ENCODE measurements at regions of chr1 and their contacts with region 1.

Region 1: GRCh38 chr1:32448773-32449456 is 16.0 kb upstream of the ZBTB8B start:
- DNase-seq: no peak
- H3K4me3 ChIP-seq: no peak overlapping the region
- H3K27ac ChIP-seq: no peak overlapping the region
- H3K4me1 ChIP-seq: peaks cover 0 to 12% (median 6%) of the 10 kb centered on the region in 4 donors
- H3K27me3 ChIP-seq: no peaks in the 10 kb centered on the region
- CTCF ChIP-seq: peak in 1 of 4 experiments; percentile 16
- EP300 ChIP-seq: no peak
- POLR2A ChIP-seq: no peak

Region 2: DNA sequence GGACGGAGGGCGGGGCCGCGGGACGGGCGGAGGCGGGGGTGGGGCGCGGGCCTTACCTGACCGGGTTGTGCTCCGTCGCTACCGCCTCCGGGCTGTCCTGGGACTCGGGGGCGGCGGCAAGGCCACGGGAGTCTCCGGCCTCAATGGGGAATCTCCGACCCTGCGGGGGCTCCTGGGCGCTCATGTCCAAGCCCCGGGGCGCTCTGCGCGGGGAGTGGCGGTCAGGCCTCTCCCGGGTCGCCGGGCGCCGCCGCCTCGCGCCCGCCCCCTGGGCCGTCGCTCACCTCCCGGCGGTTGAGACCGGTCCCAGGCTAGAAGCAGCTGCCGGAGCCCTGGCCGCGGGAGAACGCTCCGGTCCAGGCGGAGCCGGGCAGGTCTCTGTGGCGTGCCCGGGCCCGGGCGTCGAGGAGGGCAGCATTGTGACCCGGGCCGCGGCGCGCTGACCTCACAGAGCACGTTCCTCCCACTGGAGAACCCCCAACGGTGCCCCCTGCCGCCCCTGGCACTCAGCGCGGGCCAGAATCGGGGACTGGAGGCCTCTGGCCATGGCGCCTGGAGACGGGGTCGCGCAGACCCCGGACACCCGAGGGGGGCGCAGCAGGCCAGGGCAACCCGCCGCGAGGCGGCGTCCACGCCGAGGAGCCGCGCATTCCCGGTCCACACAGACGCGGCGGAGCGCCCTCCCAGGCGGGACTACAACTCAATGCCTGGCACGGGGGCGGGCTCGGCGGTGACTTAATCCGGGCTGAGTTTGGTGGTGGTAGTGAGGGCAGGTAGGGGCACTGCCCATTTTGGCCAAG is 87.0 kb before region 1 on chr1:
- intact Hi-C with region 1: no loop called
- DNase-seq: peak; percentile 75
- H3K4me3 ChIP-seq: peak overlapping the region in 3 of 4 donors; percentile 39 to 51 (median 46)
- H3K27ac ChIP-seq: peak overlapping the region in 1 of 4 donors; percentile 52
- H3K4me1 ChIP-seq: peaks cover 0 to 21% (median 18%) of the 10 kb centered on the region in 4 donors
- H3K27me3 ChIP-seq: no peaks in the 10 kb centered on the region
- CTCF ChIP-seq: peak in 1 of 4 experiments; percentile 25
- EP300 ChIP-seq: no peak
- POLR2A ChIP-seq: no peak

Region 3: GRCh38 chr1:32500387-32501209 is 51.7 kb after region 1 on chr1:
- intact Hi-C with region 1: loop called (anchors 1 kb)
- DNase-seq: peak; percentile 84
- H3K4me3 ChIP-seq: peak overlapping the region; percentile 33 to 96 (median 87)
- H3K27ac ChIP-seq: peak overlapping the region; percentile 92 to 99 (median 98)
- H3K4me1 ChIP-seq: peaks cover 0 to 37% (median 14%) of the 10 kb centered on the region in 4 donors
- H3K27me3 ChIP-seq: no peaks in the 10 kb centered on the region
- CTCF ChIP-seq: no peak
- EP300 ChIP-seq: no peak
- POLR2A ChIP-seq: no peak

Region 4: GRCh38 chr1:32521165-32521564 is 72.2 kb after region 1 on chr1:
- intact Hi-C with region 1: no loop called
- DNase-seq: no peak
- H3K4me3 ChIP-seq: no peak overlapping the region
- H3K27ac ChIP-seq: no peak overlapping the region
- H3K4me1 ChIP-seq: no peaks in the 10 kb centered on the region
- H3K27me3 ChIP-seq: no peaks in the 10 kb centered on the region
- CTCF ChIP-seq: no peak
- EP300 ChIP-seq: no peak
- POLR2A ChIP-seq: no peak

Region 5: DNA sequence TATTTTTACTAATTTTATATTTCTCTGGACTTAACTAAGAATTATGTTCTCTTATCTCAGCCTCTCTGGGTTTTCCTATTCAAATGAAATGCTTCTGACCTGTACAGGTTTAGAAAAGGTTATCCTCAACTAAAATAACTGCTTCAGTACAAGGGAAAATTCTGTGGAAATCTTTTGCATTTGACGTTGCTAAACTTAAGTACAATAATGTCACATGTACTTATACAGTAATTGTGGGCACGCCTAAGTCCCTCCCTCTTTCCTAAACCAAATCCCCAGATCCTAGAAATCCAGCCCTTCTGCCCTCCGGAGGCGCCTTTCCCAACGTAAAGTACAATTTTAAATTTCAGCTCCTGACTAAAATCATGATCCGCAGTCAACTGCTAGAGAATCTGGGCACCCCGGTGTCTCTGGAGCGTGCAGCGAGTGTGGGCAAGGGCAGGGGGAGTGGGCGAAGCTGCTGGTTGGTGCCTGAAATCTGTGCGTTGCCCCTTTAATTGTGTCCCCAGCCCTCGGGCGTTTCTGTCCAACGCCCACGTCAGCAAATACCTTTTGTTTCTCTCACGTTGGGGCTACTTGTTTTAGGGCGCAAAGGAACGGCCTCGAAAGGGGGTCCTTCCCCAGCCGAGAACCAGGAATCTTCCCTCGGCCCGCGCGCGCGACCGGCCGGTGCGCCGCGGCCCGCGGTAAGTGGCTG is 90.1 kb after region 1 on chr1 and contains the start of gene ZBTB8A:
- intact Hi-C with region 1: loop called (anchors 5 kb)
- DNase-seq: peak; percentile 76
- H3K4me3 ChIP-seq: peak within 1 kb of the TSS; percentile 35 to 70 (median 66)
- H3K27ac ChIP-seq: peak within 1 kb of the TSS; percentile 82 to 84 (median 83)
- H3K4me1 ChIP-seq: peaks cover 0 to 17% (median 10%) of the 10 kb centered on the region in 4 donors
- H3K27me3 ChIP-seq: no peaks in the 10 kb centered on the region
- CTCF ChIP-seq: no peak
- EP300 ChIP-seq: no peak
- POLR2A ChIP-seq: no peak
- total RNA-seq, gene ZBTB8A: 5.6 to 10.8 (median 7.0) TPM

Region 6: GRCh38 chr1:32612189-32612881 is 163.4 kb after region 1 on chr1:
- intact Hi-C with region 1: loop called (anchors 10 kb)
- DNase-seq: peak; percentile 91
- H3K4me3 ChIP-seq: peak overlapping the region; percentile 32 to 56 (median 50)
- H3K27ac ChIP-seq: peak overlapping the region in 2 of 4 donors; percentile 23 to 26
- H3K4me1 ChIP-seq: peaks cover 0 to 12% (median 8%) of the 10 kb centered on the region in 4 donors
- H3K27me3 ChIP-seq: no peaks in the 10 kb centered on the region
- CTCF ChIP-seq: peak in 3 of 4 experiments; percentile 29 to 50 (median 32)
- EP300 ChIP-seq: no peak
- POLR2A ChIP-seq: peak in 1 of 2 donors; percentile 23